ENCODE measurements at regions of chr3 and their contacts with region 1.

Region 1: GRCh38 chr3:4466741-4467521 is at the start of gene SUMF1:
- DNase-seq: peak; percentile 51 to 85 (median 64)
- ATAC-seq: peak; percentile 93
- H3K4me3 ChIP-seq: peak within 1 kb of the TSS; percentile 77
- H3K4me3 Mint-ChIP-seq: peak within 1 kb of the TSS; percentile 91
- H3K27ac ChIP-seq: peak within 1 kb of the TSS; percentile 53 to 69
- H3K27ac Mint-ChIP-seq: peak within 1 kb of the TSS; percentile 83
- H3K4me1 ChIP-seq: peaks cover 15% of the 10 kb centered on the region
- H3K4me1 Mint-ChIP-seq: peaks cover 29% of the 10 kb centered on the region
- H3K27me3 ChIP-seq: no peaks in the 10 kb centered on the region
- H3K27me3 Mint-ChIP-seq: no peaks in the 10 kb centered on the region
- CTCF ChIP-seq: no peak
- total RNA-seq, gene SUMF1: 7.0 to 8.1 TPM

Region 2: GRCh38 chr3:4303187-4304123 is 163.5 kb before region 1 on chr3 and contains the start of gene SETMAR:
- CTCF ChIA-PET with region 1: no interaction called
- POLR2A ChIA-PET with region 1: no interaction called
- intact Hi-C with region 1: loop called in 1 of 2 experiments (anchors 5 kb)
- DNase-seq: peak; percentile 69 to 90 (median 78)
- ATAC-seq: peak; percentile 92
- H3K4me3 ChIP-seq: peak within 1 kb of the TSS; percentile 83
- H3K4me3 Mint-ChIP-seq: peak within 1 kb of the TSS; percentile 95
- H3K27ac ChIP-seq: peak within 1 kb of the TSS; percentile 80 to 89
- H3K27ac Mint-ChIP-seq: peak within 1 kb of the TSS; percentile 94
- H3K4me1 ChIP-seq: peaks cover 20% of the 10 kb centered on the region
- H3K4me1 Mint-ChIP-seq: peaks cover 41% of the 10 kb centered on the region
- H3K27me3 ChIP-seq: no peaks in the 10 kb centered on the region
- H3K27me3 Mint-ChIP-seq: no peaks in the 10 kb centered on the region
- CTCF ChIP-seq: no peak
- total RNA-seq, gene SETMAR: 9.1 to 9.2 TPM

Region 3: DNA sequence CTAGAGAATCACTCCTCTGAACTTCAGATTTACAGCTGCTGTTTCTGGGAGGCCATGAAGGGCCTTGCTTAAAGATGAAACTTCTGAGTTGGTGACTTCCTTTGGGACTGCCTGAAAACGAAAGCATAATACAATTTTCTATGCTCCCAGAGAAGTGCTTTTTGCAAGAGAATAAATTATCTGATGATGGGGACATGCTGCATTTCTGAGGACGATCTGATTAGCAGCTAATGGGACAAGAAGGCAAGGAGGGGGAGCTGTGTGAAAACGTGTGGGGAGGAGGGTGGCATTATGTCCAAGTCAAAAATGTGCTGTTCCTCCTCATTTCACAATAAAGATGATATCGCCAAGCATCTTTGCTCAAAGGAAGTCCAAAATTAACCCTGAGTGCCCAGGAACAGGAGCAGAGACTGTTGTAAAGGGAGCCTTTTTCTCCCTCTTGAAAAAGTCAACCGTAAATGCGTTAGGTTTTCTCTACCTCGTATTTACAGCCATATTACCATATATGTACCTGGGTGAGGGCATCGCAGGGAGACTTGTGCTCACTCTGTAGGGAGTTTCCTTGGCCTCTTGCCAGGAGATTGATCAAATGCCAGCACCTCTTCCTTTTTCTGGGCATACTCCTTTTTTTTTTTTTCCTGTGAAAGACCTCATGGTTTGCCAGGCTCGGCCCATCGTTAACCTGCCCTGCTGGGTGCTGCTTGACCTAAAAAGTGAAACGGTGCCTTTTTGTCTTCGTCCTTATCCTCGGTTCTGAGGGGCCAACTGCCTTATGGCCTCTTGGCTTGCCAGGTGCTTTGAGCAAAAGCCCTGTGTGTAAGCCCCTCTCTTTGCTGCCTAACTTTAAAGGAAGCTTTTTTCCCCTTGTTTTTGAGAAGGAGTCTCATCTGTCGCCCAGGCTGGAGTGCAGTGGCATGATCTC is 37.7 kb after region 1 on chr3:
- CTCF ChIA-PET with region 1: no interaction called
- POLR2A ChIA-PET with region 1: no interaction called
- intact Hi-C with region 1: loop called in 1 of 2 experiments (anchors 5 kb)
- DNase-seq: peak in 9 of 14 experiments; percentile 16 to 82 (median 42)
- ATAC-seq: peak; percentile 85
- H3K4me3 ChIP-seq: peak overlapping the region; percentile 57
- H3K4me3 Mint-ChIP-seq: peak overlapping the region; percentile 57
- H3K27ac ChIP-seq: peak overlapping the region; percentile 64 to 80
- H3K27ac Mint-ChIP-seq: peak overlapping the region; percentile 82
- H3K4me1 ChIP-seq: peaks cover 25% of the 10 kb centered on the region
- H3K4me1 Mint-ChIP-seq: peaks cover 38% of the 10 kb centered on the region
- H3K27me3 ChIP-seq: no peaks in the 10 kb centered on the region
- H3K27me3 Mint-ChIP-seq: no peaks in the 10 kb centered on the region
- CTCF ChIP-seq: no peak

Region 4: DNA sequence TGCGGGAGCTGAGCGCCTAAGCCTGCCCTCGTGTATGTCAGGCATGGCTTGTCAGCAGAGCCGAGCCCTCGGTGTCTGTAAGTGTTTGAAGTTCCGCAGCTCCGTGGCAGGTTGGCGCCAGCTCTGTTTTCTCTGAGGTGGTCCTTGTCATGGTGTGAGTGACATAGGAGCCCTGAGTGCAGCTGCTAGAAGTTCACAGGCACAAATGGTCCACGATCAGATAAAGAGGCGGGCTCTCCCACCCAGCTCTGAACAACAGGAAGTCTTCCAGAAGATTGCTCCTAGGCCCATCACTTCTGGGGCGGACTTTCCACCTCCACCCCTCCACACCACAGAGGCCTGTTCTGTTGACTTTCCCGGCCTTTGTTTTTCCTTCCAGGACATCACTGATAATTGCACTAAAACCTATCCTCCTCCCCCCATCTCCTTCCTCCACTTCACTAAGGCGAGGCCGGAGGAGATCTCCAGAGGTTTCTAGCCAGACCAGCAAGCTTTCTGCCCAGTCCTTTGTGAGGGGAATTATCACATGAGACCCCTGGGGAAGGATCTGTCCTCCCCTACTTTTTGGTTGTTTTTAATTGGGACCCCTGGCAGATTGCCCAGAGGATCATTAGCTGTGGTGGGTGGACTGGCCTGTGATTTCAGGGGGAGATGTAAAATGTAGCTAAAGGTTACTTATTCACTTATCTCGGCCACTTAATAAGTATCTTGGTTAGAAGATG is 46.1 kb after region 1 on chr3:
- CTCF ChIA-PET with region 1: no interaction called
- POLR2A ChIA-PET with region 1: interaction called, 13 read pairs
- intact Hi-C with region 1: loop called in 1 of 2 experiments (anchors 5 kb)
- DNase-seq: no peak
- ATAC-seq: no peak
- H3K4me3 ChIP-seq: no peak overlapping the region
- H3K4me3 Mint-ChIP-seq: no peak overlapping the region
- H3K27ac ChIP-seq: no peak overlapping the region
- H3K27ac Mint-ChIP-seq: no peak overlapping the region
- H3K4me1 ChIP-seq: peaks cover 14% of the 10 kb centered on the region
- H3K4me1 Mint-ChIP-seq: peaks cover 59% of the 10 kb centered on the region
- H3K27me3 ChIP-seq: no peaks in the 10 kb centered on the region
- H3K27me3 Mint-ChIP-seq: no peaks in the 10 kb centered on the region
- CTCF ChIP-seq: no peak

Region 5: DNA sequence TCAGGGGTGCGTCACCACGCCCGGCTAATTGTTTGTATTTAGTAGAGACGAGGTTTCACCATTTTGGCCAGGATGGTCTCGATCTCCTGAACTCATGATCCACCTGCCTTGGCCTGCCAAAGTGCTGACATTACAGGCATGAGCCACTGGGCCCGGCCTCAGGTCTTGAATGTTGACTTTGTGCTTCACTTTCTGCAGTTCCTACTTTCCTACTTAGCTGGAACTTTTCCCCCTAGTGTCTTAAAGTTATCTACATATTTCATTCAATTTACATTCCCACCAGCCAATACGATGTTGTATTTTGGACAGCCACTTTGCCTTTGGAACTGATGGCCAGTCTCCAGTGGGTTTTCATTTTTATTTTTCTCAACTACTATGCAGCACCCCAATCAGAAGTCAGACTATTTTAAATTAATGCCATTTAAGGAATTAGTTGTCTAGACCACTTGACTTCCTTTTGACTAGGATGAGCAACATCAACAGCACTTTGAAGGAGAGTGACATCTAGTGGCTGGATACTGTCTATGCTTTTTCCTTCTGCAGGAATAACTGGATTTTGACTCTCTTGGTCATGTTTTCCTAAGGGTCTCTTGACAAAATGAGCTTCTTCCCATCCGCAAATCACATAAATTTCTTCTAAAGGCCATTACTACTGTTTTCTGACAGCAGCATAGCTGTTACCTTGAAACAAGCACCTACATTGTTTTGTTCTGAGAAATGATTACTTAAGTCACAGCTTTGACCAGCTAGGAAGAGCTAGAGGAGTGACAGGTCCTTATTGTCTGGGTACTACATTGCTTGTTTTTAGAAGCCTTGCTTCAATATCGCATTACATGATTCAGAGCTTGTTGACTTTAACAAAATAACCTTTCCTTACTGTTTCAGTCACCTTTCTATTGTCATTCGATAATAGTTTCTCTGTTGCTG is 166.4 kb after region 1 on chr3:
- CTCF ChIA-PET with region 1: no interaction called
- POLR2A ChIA-PET with region 1: no interaction called
- intact Hi-C with region 1: loop called in 1 of 2 experiments (anchors 5 kb)
- DNase-seq: peak in 3 of 14 experiments; percentile 61 to 70 (median 69)
- ATAC-seq: peak; percentile 70
- H3K4me3 ChIP-seq: no peak overlapping the region
- H3K4me3 Mint-ChIP-seq: no peak overlapping the region
- H3K27ac ChIP-seq: no peak overlapping the region
- H3K27ac Mint-ChIP-seq: no peak overlapping the region
- H3K4me1 ChIP-seq: no peaks in the 10 kb centered on the region
- H3K4me1 Mint-ChIP-seq: peaks cover 7% of the 10 kb centered on the region
- H3K27me3 ChIP-seq: no peaks in the 10 kb centered on the region
- H3K27me3 Mint-ChIP-seq: no peaks in the 10 kb centered on the region
- CTCF ChIP-seq: peak; percentile 88

Region 6: GRCh38 chr3:5122030-5122740 is 655.3 kb after region 1 on chr3 and contains the start of gene ARL8B:
- CTCF ChIA-PET with region 1: no interaction called
- POLR2A ChIA-PET with region 1: no interaction called
- intact Hi-C with region 1: loop called in 1 of 2 experiments (anchors 10 kb)
- DNase-seq: peak; percentile 83 to 94 (median 90)
- ATAC-seq: peak; percentile 99
- H3K4me3 ChIP-seq: peak within 1 kb of the TSS; percentile 94
- H3K4me3 Mint-ChIP-seq: peak within 1 kb of the TSS; percentile 87
- H3K27ac ChIP-seq: peak within 1 kb of the TSS; percentile 79 to 86
- H3K27ac Mint-ChIP-seq: peak within 1 kb of the TSS; percentile 87
- H3K4me1 ChIP-seq: peaks cover 36% of the 10 kb centered on the region
- H3K4me1 Mint-ChIP-seq: peaks cover 50% of the 10 kb centered on the region
- H3K27me3 ChIP-seq: no peaks in the 10 kb centered on the region
- H3K27me3 Mint-ChIP-seq: no peaks in the 10 kb centered on the region
- CTCF ChIP-seq: peak; percentile 97
- total RNA-seq, gene ARL8B: 48.5 to 49.7 TPM